Transverse colon (tissue), 4 donors: ENCODE measurements at regions of chr1 and their contacts with region 1.

Region 1: GRCh38 chr1:185880779-185881333 is 146.7 kb downstream of the HMCN1 start:
- DNase-seq: no peak
- H3K4me3 ChIP-seq: no peak overlapping the region
- H3K27ac ChIP-seq: peak overlapping the region in 2 of 4 donors; percentile 18 to 49
- H3K4me1 ChIP-seq: peaks cover 0 to 17% (median 6%) of the 10 kb centered on the region in 4 donors
- H3K27me3 ChIP-seq: no peaks in the 10 kb centered on the region
- CTCF ChIP-seq: no peak
- EP300 ChIP-seq: no peak
- POLR2A ChIP-seq: no peak

Region 2: GRCh38 chr1:185907246-185907645 is 26.4 kb after region 1 on chr1:
- in situ Hi-C with region 1: no loop called
- intact Hi-C with region 1: loop called (anchors 1 kb)
- DNase-seq: no peak
- H3K4me3 ChIP-seq: no peak overlapping the region
- H3K27ac ChIP-seq: no peak overlapping the region
- H3K4me1 ChIP-seq: no peaks in the 10 kb centered on the region
- H3K27me3 ChIP-seq: no peaks in the 10 kb centered on the region
- CTCF ChIP-seq: no peak
- EP300 ChIP-seq: no peak
- POLR2A ChIP-seq: no peak